ENCODE measurements at regions of chr3 and their contacts with region 1.

Region 1: GRCh38 chr3:150861851-150862250 is 43.4 kb downstream of the MINDY4B start:
- DNase-seq: no peak
- H3K4me3 ChIP-seq: no peak overlapping the region
- H3K27ac ChIP-seq: no peak overlapping the region
- H3K4me1 ChIP-seq: peaks cover 0 to 9% (median 0%) of the 10 kb centered on the region in 6 donors
- H3K27me3 ChIP-seq: peaks cover 0 to 7% (median 0%) of the 10 kb centered on the region in 7 donors
- CTCF ChIP-seq: no peak
- POLR2A ChIP-seq: no peak

Region 2: GRCh38 chr3:150721285-150722130 is 140.3 kb before region 1 on chr3:
- intact Hi-C with region 1: loop called (anchors 2 kb)
- DNase-seq: no peak
- H3K4me3 ChIP-seq: no peak overlapping the region
- H3K27ac ChIP-seq: no peak overlapping the region
- H3K4me1 ChIP-seq: peaks cover 0 to 9% (median 6%) of the 10 kb centered on the region in 6 donors
- H3K27me3 ChIP-seq: no peaks in the 10 kb centered on the region
- CTCF ChIP-seq: peak; percentile 57 to 93 (median 83)
- POLR2A ChIP-seq: no peak

Measured in spleen (tissue), 13 donors.